T-cell (primary cell): ENCODE measurements at regions of chr9 and their contacts with region 1.

Region 1: GRCh38 chr9:113511856-113512761 is 48.6 kb downstream of the RGS3 start:
- DNase-seq: peak; percentile 39 to 82 (median 67)
- ATAC-seq: peak; percentile 71 to 74 (median 72)
- H3K4me3 ChIP-seq: peak overlapping the region; percentile 19 to 35
- H3K4me3 Mint-ChIP-seq: peak overlapping the region; percentile 69 to 73 (median 72)
- H3K27ac ChIP-seq: peak overlapping the region; percentile 91
- H3K27ac Mint-ChIP-seq: peak overlapping the region; percentile 95 to 99
- H3K4me1 ChIP-seq: peaks cover 42 to 67% of the 10 kb centered on the region in 2 experiments
- H3K4me1 Mint-ChIP-seq: peaks cover 62 to 73% (median 68%) of the 10 kb centered on the region in 3 donors
- H3K27me3 ChIP-seq: no peaks in the 10 kb centered on the region
- H3K27me3 Mint-ChIP-seq: no peaks in the 10 kb centered on the region

Region 2: DNA sequence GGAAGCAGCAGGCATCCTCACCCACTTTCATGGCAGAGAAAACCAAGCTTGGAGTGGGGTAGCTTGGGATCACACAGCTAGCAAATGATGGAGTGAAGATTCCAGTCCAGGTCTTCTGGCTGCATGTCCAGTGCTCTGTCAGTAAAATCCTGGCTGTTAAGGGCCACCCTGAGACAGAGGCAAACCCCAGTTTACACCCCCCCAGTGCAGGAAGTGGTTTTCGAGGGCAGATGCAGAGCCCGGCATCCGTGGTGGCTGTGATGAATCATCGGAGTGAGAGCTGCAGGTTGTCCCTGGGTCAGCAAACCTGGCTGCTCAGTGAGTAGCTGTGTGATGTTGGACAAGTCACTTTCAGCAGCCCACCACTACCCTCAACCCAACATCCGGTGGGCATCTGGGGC is 66.8 kb after region 1 on chr9:
- CTCF ChIA-PET with region 1: interaction called in 1 of 2 experiments, 10 read pairs
- POLR2A ChIA-PET with region 1: interaction called in 1 of 2 experiments, 4 read pairs
- DNase-seq: peak; percentile 52 to 87 (median 74)
- ATAC-seq: peak; percentile 67 to 78 (median 74)
- H3K4me3 ChIP-seq: peak overlapping the region; percentile 10 to 17
- H3K4me3 Mint-ChIP-seq: peak overlapping the region; percentile 52 to 81 (median 62)
- H3K27ac ChIP-seq: peak overlapping the region; percentile 91
- H3K27ac Mint-ChIP-seq: peak overlapping the region; percentile 98 to 99
- H3K4me1 ChIP-seq: peaks cover 38 to 78% of the 10 kb centered on the region in 2 experiments
- H3K4me1 Mint-ChIP-seq: peaks cover 74 to 88% (median 78%) of the 10 kb centered on the region in 3 donors
- H3K27me3 ChIP-seq: no peaks in the 10 kb centered on the region
- H3K27me3 Mint-ChIP-seq: no peaks in the 10 kb centered on the region